H1 (cell line): ENCODE measurements at regions of chr10 and their contacts with region 1.

Region 1: DNA sequence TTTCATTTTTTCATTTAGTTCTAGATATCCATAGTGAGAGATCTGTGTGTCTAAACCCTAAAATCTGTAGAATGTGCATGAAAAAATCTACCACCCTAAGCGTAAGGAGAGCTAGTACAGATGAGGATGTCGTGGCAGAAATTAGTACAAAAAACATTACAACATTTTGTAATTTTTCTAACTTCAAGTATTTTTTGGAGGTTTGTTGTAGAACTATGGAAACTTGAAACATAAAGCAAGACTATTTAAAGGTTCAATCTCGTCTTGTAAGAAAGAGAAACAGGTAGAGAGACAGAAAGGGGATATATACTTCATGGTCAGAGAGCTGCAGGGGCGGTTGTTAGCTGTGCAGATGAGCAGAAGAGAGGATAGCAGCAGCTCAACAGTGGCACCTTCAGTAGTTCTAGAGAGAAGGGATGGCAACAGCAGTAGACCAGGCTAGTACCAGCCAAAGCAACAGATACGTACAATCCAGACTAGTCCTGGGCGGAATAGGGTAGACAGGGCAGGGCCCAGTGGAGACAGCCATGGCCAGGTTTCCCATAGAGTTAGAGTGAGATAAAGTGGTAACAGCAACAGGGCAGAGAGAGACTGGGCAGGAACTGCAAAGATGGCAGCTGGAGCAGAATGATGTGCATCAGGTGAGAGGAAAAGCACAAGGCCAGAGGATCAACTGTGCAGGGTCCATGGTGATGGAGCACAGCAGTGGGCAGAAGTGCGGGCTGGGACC is 145.2 kb downstream of the FRMD4A start:
- DNase-seq: peak; percentile 64 to 80
- H3K4me3 ChIP-seq: no peak overlapping the region
- H3K27ac ChIP-seq: peak overlapping the region; percentile 81
- H3K4me1 ChIP-seq: peaks cover 0 to 6% (median 3%) of the 10 kb centered on the region in 4 experiments; a peak in 4 of 7 replicates
- H3K27me3 ChIP-seq: no peaks in the 10 kb centered on the region
- CTCF ChIP-seq: peak in 2 of 3 experiments; percentile 10 to 20; a peak in 2 of 4 replicates
- EP300 ChIP-seq: 0 out of 3 replicates have a peak, but pooled peaks of 1 of the 2 experiments have one; percentile 58
- POLR2A ChIP-seq: peak; percentile 99
- RAD21 ChIP-seq: peak; percentile 51

Region 2: GRCh38 chr10:13953371-13953770 is 232.1 kb before region 1 on chr10:
- CTCF ChIA-PET with region 1: no interaction called
- POLR2A ChIA-PET with region 1: no interaction called
- DNase-seq: no peak
- H3K4me3 ChIP-seq: no peak overlapping the region
- H3K27ac ChIP-seq: no peak overlapping the region
- H3K4me1 ChIP-seq: peaks cover 0 to 2% (median under 1%) of the 10 kb centered on the region in 4 experiments; a peak in 2 of 7 replicates
- H3K27me3 ChIP-seq: no peaks in the 10 kb centered on the region
- CTCF ChIP-seq: no peak
- EP300 ChIP-seq: no peak
- POLR2A ChIP-seq: no peak
- RAD21 ChIP-seq: no peak

Region 3: GRCh38 chr10:14153570-14154055 is 31.9 kb before region 1 on chr10:
- CTCF ChIA-PET with region 1: interaction called, 3 read pairs
- POLR2A ChIA-PET with region 1: interaction called, 10 read pairs
- DNase-seq: peak in 1 of 2 experiments; percentile 54
- H3K4me3 ChIP-seq: no peak overlapping the region
- H3K27ac ChIP-seq: no peak overlapping the region
- H3K4me1 ChIP-seq: no peaks in the 10 kb centered on the region
- H3K27me3 ChIP-seq: no peaks in the 10 kb centered on the region
- CTCF ChIP-seq: peak in 2 of 3 experiments; percentile 3 to 5; a peak in 2 of 4 replicates
- EP300 ChIP-seq: no peak
- POLR2A ChIP-seq: no peak
- RAD21 ChIP-seq: peak in 1 of 2 experiments; percentile 8; a peak in 1 of 4 replicates

Region 4: GRCh38 chr10:14173706-14174594 is 11.5 kb before region 1 on chr10:
- CTCF ChIA-PET with region 1: interaction called, 6 read pairs
- POLR2A ChIA-PET with region 1: interaction called, 63 read pairs
- DNase-seq: peak in 1 of 2 experiments; percentile 67
- H3K4me3 ChIP-seq: peak overlapping the region; percentile 61 to 82 (median 68)
- H3K27ac ChIP-seq: no peak overlapping the region
- H3K4me1 ChIP-seq: peaks cover 0 to 6% (median 1%) of the 10 kb centered on the region in 4 experiments; a peak in 3 of 7 replicates
- H3K27me3 ChIP-seq: peaks cover 0 to 12% (median 2%) of the 10 kb centered on the region in 4 experiments; a peak in 3 of 7 replicates
- CTCF ChIP-seq: no peak
- EP300 ChIP-seq: no peak
- POLR2A ChIP-seq: peak in 1 of 2 experiments; percentile 46; a peak in 1 of 3 replicates
- RAD21 ChIP-seq: no peak

Region 5: DNA sequence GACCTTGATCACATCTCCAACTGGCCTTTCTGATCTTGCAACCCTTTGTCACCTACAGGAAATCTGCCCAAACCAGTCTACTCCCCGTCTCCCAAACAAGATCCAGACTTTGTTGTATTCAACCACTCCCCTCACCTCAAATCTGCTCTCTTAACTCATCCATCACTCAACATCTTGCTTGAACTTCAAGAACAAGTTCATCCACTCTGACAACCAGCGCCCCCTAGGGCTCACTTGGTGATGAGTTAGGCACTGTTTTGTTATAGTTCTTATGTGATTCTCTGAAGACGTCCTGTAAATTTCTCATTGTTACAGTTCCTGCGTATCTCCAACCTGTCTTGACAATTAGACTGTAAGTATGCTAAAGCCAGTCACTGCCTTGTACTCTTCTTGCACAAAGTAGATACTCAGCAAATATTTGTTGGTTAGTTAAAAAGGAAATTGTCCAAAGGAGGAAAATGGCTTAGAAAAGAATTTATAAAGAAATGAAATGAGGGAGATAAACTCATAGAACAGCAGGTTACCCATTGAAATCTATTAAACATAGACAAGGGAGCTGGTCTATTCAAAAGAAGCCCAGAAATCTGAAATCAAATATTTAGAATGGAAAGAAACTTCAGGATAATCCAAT is 140.0 kb after region 1 on chr10:
- CTCF ChIA-PET with region 1: interaction called, 4 read pairs
- POLR2A ChIA-PET with region 1: interaction called, 10 read pairs
- DNase-seq: peak; percentile 39 to 89
- H3K4me3 ChIP-seq: no peak overlapping the region
- H3K27ac ChIP-seq: no peak overlapping the region
- H3K4me1 ChIP-seq: peaks cover 12 to 15% (median 14%) of the 10 kb centered on the region in 4 experiments
- H3K27me3 ChIP-seq: no peaks in the 10 kb centered on the region
- CTCF ChIP-seq: peak in 2 of 3 experiments; percentile 61 to 84; a peak in 3 of 4 replicates
- EP300 ChIP-seq: no peak
- POLR2A ChIP-seq: no peak
- RAD21 ChIP-seq: peak; percentile 52 to 72

Region 6: DNA sequence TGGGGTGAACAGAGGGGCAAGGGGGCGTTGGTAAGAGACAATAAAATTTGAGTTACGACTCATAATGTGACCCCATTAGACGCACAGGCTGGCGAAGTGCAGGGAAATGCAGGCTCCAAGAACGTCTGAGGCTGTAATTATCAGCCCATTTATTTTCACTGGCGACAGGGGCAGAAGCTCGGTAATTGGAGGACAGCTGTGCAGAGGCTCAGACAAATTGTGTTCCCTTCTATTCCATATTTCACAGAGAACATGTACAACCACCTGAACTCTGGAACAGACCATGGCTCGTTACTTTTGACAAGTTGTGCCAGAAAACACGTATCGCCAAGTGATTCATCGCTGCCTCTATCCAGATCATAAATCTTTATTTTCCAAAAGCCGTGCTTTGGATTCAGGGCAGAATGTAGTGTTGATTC is 282.6 kb after region 1 on chr10:
- CTCF ChIA-PET with region 1: no interaction called
- POLR2A ChIA-PET with region 1: no interaction called
- DNase-seq: no peak
- H3K4me3 ChIP-seq: no peak overlapping the region
- H3K27ac ChIP-seq: no peak overlapping the region
- H3K4me1 ChIP-seq: no peaks in the 10 kb centered on the region; a peak in 1 of 7 replicates
- H3K27me3 ChIP-seq: no peaks in the 10 kb centered on the region
- CTCF ChIP-seq: no peak
- EP300 ChIP-seq: no peak
- POLR2A ChIP-seq: no peak
- RAD21 ChIP-seq: no peak